WTC11 (cell line): ENCODE measurements at regions of chr22 and their contacts with region 1.

Region 1: GRCh38 chr22:45863981-45864751 is 112.8 kb downstream of the WNT7B start:
- DNase-seq: peak; percentile 88
- ATAC-seq: peak; percentile 23
- H3K4me3 Mint-ChIP-seq: no peak overlapping the region
- H3K27ac Mint-ChIP-seq: no peak overlapping the region
- H3K4me1 Mint-ChIP-seq: peaks cover 24% of the 10 kb centered on the region
- H3K27me3 Mint-ChIP-seq: peaks cover 53% of the 10 kb centered on the region
- CTCF ChIP-seq: peak; percentile 97

Region 2: DNA sequence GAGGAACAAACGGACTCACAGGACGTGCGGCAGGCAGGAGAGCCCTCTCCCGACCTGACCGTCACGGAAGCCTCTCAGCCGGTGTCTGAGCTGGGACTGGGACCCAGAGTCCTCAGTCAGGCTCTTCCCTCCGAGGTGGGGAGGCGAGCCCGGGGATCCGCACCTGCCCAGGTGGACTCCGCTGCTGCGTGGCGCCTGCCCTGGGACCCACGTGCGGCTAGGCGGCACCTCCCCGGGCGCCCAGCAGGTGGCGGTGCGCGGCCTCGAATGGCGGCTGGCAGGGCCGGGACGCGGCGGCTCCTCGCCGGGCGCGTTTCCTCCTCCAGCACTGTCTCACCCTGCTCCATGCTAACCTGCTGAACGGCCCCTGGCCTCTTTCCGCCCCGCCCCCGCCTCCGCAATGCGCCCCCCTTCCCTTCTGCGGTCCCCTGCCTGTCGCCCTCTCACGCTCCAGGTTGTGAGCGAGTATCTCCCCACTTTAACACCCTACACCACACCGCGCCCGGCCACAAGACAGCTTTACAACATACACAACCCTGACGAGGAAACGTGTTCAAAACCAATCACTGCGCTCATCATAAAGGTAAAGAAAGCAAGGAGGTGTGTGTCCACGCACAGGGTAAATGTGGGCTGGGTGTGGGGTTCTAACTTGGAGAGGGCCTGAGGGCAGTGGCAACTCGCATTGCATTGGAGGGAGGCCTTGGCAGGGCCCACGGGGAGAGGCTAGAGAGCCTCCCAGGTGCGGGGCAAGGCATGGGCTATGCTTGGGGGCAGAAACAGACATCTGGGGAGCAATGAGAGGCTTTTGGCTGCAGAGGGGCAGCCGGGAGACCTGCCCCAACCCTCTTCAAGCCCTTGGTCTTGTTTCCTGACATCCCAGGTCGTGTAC is 218.4 kb before region 1 on chr22:
- CTCF ChIA-PET with region 1: interaction called, 11 read pairs
- POLR2A ChIA-PET with region 1: no interaction called
- DNase-seq: peak; percentile 86
- ATAC-seq: peak; percentile 93
- H3K4me3 Mint-ChIP-seq: peak overlapping the region; percentile 61
- H3K27ac Mint-ChIP-seq: no peak overlapping the region
- H3K4me1 Mint-ChIP-seq: peaks cover 21% of the 10 kb centered on the region
- H3K27me3 Mint-ChIP-seq: peaks cover 36% of the 10 kb centered on the region
- CTCF ChIP-seq: peak; percentile 88

Region 3: DNA sequence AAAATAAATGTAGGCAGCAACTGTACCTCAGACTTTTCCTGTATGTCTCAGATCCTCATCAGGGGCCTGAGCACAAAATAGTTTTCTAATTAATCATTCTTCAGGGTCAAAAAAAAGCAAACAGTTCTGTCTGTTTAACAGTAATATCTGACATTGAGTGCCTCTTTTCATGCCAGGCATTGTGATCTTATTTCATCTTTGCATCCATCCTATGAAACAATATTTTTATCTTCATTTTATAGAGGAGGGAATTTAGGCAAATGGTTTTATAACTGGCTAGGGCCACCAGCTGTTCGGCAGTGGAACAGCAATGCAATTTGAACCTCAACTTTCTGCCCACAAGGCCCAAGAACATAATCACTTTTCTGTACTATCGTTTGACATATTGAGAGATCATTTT is 32.8 kb before region 1 on chr22:
- CTCF ChIA-PET with region 1: interaction called, 24 read pairs
- POLR2A ChIA-PET with region 1: no interaction called
- DNase-seq: no peak
- ATAC-seq: no peak
- H3K4me3 Mint-ChIP-seq: no peak overlapping the region
- H3K27ac Mint-ChIP-seq: no peak overlapping the region
- H3K4me1 Mint-ChIP-seq: peaks cover 20% of the 10 kb centered on the region
- H3K27me3 Mint-ChIP-seq: no peaks in the 10 kb centered on the region
- CTCF ChIP-seq: no peak

Region 4: GRCh38 chr22:45878051-45878781 is 14.1 kb after region 1 on chr22:
- CTCF ChIA-PET with region 1: interaction called, 35 read pairs
- POLR2A ChIA-PET with region 1: interaction called, 3 read pairs
- DNase-seq: no peak
- ATAC-seq: no peak; the same call in 1 of the 2 replicates
- H3K4me3 Mint-ChIP-seq: no peak overlapping the region
- H3K27ac Mint-ChIP-seq: no peak overlapping the region
- H3K4me1 Mint-ChIP-seq: peaks cover 24% of the 10 kb centered on the region
- H3K27me3 Mint-ChIP-seq: peaks cover 55% of the 10 kb centered on the region
- CTCF ChIP-seq: no peak

Region 5: GRCh38 chr22:45968751-45969413 is 104.7 kb after region 1 on chr22:
- CTCF ChIA-PET with region 1: interaction called, 69 read pairs
- POLR2A ChIA-PET with region 1: interaction called, 3 read pairs
- DNase-seq: no peak
- ATAC-seq: no peak
- H3K4me3 Mint-ChIP-seq: no peak overlapping the region
- H3K27ac Mint-ChIP-seq: no peak overlapping the region
- H3K4me1 Mint-ChIP-seq: peaks cover 24% of the 10 kb centered on the region
- H3K27me3 Mint-ChIP-seq: peaks cover 59% of the 10 kb centered on the region
- CTCF ChIP-seq: no peak